Right ventricle myocardium superior (tissue), 1 donor: ENCODE measurements at regions of chr2 and their contacts with region 1.

Region 1: GRCh38 chr2:10122386-10123280 is at the start of gene RRM2:
- DNase-seq: peak; percentile 95
- ATAC-seq: peak; percentile 89
- total RNA-seq, gene RRM2: 1.9 TPM

Region 2: GRCh38 chr2:10434886-10435819 is 312.5 kb after region 1 on chr2:
- intact Hi-C with region 1: loop called (anchors 2 kb)
- DNase-seq: peak; percentile 85
- ATAC-seq: peak; percentile 91

Region 3: DNA sequence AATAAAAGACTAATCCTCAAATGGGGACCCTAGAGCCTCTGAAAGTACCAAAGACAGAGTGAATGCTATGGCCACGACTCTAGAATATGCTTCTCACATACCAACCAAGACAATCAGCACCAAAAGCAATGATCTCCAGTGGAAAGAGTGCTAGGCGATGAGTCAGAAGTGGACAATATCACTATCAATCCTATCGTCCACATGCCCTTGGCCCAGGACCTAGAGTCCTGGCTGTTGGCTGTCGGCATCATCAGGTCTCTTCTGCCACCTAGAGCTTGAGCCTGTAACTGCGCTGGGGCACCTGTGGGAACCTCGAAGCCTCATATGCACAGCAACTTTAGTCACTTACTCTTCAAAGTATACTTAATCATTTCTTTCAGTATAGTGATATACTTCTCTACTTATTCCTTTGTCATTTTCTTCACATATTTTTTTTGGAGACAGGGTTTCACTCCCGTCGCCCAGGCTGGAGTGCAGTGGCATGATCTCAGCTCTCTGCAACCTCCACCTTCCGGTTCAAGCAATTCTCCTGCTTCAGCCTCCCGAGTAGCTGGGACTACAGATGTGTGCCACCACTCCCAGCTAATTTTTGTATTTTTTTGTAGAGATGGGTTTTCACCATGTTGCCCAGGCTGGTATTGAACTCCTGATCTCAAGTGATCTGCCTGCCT is 537.4 kb after region 1 on chr2:
- intact Hi-C with region 1: loop called (anchors 10 kb)
- DNase-seq: peak; percentile 62
- ATAC-seq: peak; percentile 91